ENCODE measurements at regions of chr11 and their contacts with region 1.

Region 1: DNA sequence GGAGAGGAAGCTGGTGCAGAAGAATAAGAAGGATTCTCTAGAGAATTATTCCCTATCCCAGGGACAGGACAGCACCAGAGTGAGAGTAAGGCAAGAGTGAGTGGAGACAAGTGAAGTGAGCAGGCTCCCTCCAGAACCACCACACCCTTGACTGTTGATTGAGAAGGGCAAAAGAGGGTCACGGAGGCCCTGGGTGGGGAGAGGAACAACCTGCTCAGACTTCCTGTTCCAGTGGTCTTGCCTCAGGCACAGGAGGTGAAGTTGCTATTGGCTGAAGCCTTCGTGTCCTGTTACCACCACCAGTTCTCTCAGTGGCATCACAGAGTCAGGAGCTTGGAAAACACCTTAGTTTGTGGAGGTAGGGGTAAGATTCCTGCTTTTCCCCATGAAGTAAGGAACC is 51.8 kb upstream of the CCDC89 start:
- DNase-seq: peak in 6 of 9 experiments; percentile 16 to 62 (median 33)
- ATAC-seq: peak; percentile 52
- H3K4me3 ChIP-seq: no peak overlapping the region
- H3K4me3 Mint-ChIP-seq: peak overlapping the region; percentile 11
- H3K27ac ChIP-seq: peak overlapping the region in 1 of 2 experiments; percentile 52
- H3K27ac Mint-ChIP-seq: peak overlapping the region; percentile 76
- H3K4me1 ChIP-seq: peaks cover 26% of the 10 kb centered on the region
- H3K4me1 Mint-ChIP-seq: peaks cover 49% of the 10 kb centered on the region
- H3K27me3 ChIP-seq: no peaks in the 10 kb centered on the region
- H3K27me3 Mint-ChIP-seq: no peaks in the 10 kb centered on the region
- CTCF ChIP-seq: no peak

Region 2: GRCh38 chr11:84675396-84676025 is 1062.2 kb before region 1 on chr11:
- CTCF ChIA-PET with region 1: no interaction called
- POLR2A ChIA-PET with region 1: no interaction called
- intact Hi-C with region 1: no loop called
- DNase-seq: no peak
- ATAC-seq: no peak
- H3K4me3 ChIP-seq: no peak overlapping the region
- H3K4me3 Mint-ChIP-seq: no peak overlapping the region
- H3K27ac ChIP-seq: no peak overlapping the region
- H3K27ac Mint-ChIP-seq: no peak overlapping the region
- H3K4me1 ChIP-seq: no peaks in the 10 kb centered on the region
- H3K4me1 Mint-ChIP-seq: no peaks in the 10 kb centered on the region
- H3K27me3 ChIP-seq: no peaks in the 10 kb centered on the region
- H3K27me3 Mint-ChIP-seq: no peaks in the 10 kb centered on the region
- CTCF ChIP-seq: no peak

Region 3: DNA sequence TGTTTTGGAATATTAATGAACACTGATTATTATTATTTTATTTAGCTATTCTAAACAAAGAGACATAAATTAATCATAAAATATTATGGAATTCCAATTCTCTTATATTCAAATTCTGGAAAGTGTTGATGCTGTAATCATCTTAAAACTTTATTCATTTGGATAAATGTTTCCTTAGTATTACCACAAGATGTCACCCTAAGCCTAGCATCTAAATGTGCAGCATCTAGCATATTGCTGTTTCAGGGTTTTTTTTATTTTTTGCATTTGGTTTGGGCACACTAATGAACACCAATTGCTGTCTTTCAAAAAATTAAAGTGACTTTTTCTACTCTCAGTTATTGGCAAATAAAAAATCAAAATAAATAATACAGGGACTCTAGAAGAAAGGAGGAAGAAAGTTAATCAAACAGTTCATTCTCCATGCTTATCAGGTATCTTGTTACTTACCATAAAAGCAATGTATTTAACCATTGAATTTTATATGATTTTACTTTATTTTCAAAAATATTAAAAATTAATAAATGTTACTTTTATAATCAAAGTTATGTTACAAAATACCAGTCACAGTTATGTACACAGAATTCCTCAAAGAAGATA is 142.4 kb before region 1 on chr11:
- CTCF ChIA-PET with region 1: no interaction called
- POLR2A ChIA-PET with region 1: no interaction called
- intact Hi-C with region 1: no loop called
- DNase-seq: peak in 2 of 9 experiments; percentile 62 to 72
- ATAC-seq: peak; percentile 58
- H3K4me3 ChIP-seq: no peak overlapping the region
- H3K4me3 Mint-ChIP-seq: no peak overlapping the region
- H3K27ac ChIP-seq: no peak overlapping the region
- H3K27ac Mint-ChIP-seq: no peak overlapping the region
- H3K4me1 ChIP-seq: no peaks in the 10 kb centered on the region
- H3K4me1 Mint-ChIP-seq: no peaks in the 10 kb centered on the region
- H3K27me3 ChIP-seq: no peaks in the 10 kb centered on the region
- H3K27me3 Mint-ChIP-seq: peaks cover 2% of the 10 kb centered on the region
- CTCF ChIP-seq: peak; percentile 91

Region 4: GRCh38 chr11:85772695-85773094 is 34.9 kb after region 1 on chr11:
- CTCF ChIA-PET with region 1: no interaction called
- POLR2A ChIA-PET with region 1: no interaction called
- intact Hi-C with region 1: loop called in 1 of 2 experiments (anchors 5 kb)
- DNase-seq: no peak
- ATAC-seq: no peak
- H3K4me3 ChIP-seq: no peak overlapping the region
- H3K4me3 Mint-ChIP-seq: no peak overlapping the region
- H3K27ac ChIP-seq: no peak overlapping the region
- H3K27ac Mint-ChIP-seq: no peak overlapping the region
- H3K4me1 ChIP-seq: peaks cover 12% of the 10 kb centered on the region
- H3K4me1 Mint-ChIP-seq: peaks cover 50% of the 10 kb centered on the region
- H3K27me3 ChIP-seq: no peaks in the 10 kb centered on the region
- H3K27me3 Mint-ChIP-seq: no peaks in the 10 kb centered on the region
- CTCF ChIP-seq: no peak

Region 5: GRCh38 chr11:85779956-85780640 is 42.4 kb after region 1 on chr11:
- CTCF ChIA-PET with region 1: no interaction called
- POLR2A ChIA-PET with region 1: no interaction called
- intact Hi-C with region 1: loop called in 1 of 2 experiments (anchors 5 kb)
- DNase-seq: no peak
- ATAC-seq: no peak
- H3K4me3 ChIP-seq: no peak overlapping the region
- H3K4me3 Mint-ChIP-seq: no peak overlapping the region
- H3K27ac ChIP-seq: no peak overlapping the region
- H3K27ac Mint-ChIP-seq: no peak overlapping the region
- H3K4me1 ChIP-seq: peaks cover 17% of the 10 kb centered on the region
- H3K4me1 Mint-ChIP-seq: peaks cover 48% of the 10 kb centered on the region
- H3K27me3 ChIP-seq: no peaks in the 10 kb centered on the region
- H3K27me3 Mint-ChIP-seq: no peaks in the 10 kb centered on the region
- CTCF ChIP-seq: no peak

Region 6: GRCh38 chr11:85875142-85875922 is 137.6 kb after region 1 on chr11:
- CTCF ChIA-PET with region 1: no interaction called
- POLR2A ChIA-PET with region 1: no interaction called
- intact Hi-C with region 1: no loop called
- DNase-seq: no peak
- ATAC-seq: no peak
- H3K4me3 ChIP-seq: no peak overlapping the region
- H3K4me3 Mint-ChIP-seq: no peak overlapping the region
- H3K27ac ChIP-seq: no peak overlapping the region
- H3K27ac Mint-ChIP-seq: no peak overlapping the region
- H3K4me1 ChIP-seq: no peaks in the 10 kb centered on the region
- H3K4me1 Mint-ChIP-seq: no peaks in the 10 kb centered on the region
- H3K27me3 ChIP-seq: no peaks in the 10 kb centered on the region
- H3K27me3 Mint-ChIP-seq: no peaks in the 10 kb centered on the region
- CTCF ChIP-seq: no peak

Measured in CD8-positive, alpha-beta T cell (primary cell).